PC-3 (cell line): ENCODE measurements at regions of chr13 and their contacts with region 1.

Region 1: GRCh38 chr13:41588899-41589298 is 131.5 kb downstream of the RGCC start:
- DNase-seq: peak; percentile 86
- ATAC-seq: peak; percentile 92
- H3K4me3 ChIP-seq: no peak overlapping the region
- H3K27ac ChIP-seq: peak overlapping the region; percentile 78
- H3K4me1 ChIP-seq: peaks cover 32% of the 10 kb centered on the region
- H3K27me3 ChIP-seq: no peaks in the 10 kb centered on the region
- CTCF ChIP-seq: no peak

Region 2: GRCh38 chr13:41456768-41457588 is 131.9 kb before region 1 on chr13 and contains the start of gene RGCC:
- CTCF ChIA-PET with region 1: no interaction called
- POLR2A ChIA-PET with region 1: no interaction called
- intact Hi-C with region 1: loop called (anchors 10 kb)
- DNase-seq: peak; percentile 56
- ATAC-seq: peak; percentile 73
- H3K4me3 ChIP-seq: peak within 1 kb of the TSS; percentile 78
- H3K27ac ChIP-seq: no peak within 1 kb of the TSS
- H3K4me1 ChIP-seq: peaks cover 4% of the 10 kb centered on the region; the same call in 1 of the 2 replicates
- H3K27me3 ChIP-seq: no peaks in the 10 kb centered on the region
- CTCF ChIP-seq: no peak
- total RNA-seq, gene RGCC: 2.4 and 2.6 TPM in 2 replicates

Region 3: DNA sequence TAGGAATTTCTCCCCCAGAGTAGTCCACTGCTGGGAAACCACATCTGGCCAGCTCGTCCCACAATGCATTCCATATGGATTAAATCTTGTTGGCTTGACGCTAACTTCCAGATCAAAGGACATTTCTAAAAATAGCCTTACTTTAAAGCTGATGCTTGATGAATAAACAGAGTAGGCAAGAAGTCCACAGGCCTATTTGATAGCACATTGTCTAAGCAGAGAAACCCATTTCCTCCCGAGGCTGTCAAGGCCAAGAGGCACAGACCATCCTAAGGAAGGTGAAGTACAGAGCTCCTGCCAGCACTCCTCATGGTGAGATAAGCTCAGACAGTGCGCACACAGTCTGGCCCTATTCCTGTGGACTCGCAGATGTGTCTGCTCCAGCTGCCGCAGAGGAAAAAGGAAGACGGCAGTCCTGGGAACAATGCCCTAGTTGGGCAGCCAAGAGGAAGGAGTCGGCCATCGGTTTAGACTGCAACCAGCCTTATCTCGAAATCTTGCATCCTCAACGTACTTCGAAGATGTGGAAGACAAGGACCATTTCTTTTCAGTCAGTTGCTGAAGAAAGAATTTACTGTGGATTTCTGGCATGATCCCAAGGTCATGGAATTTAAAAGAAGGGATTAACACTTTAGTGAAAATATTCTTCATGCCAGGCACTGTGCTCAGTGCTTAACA is 25.2 kb after region 1 on chr13:
- CTCF ChIA-PET with region 1: no interaction called
- POLR2A ChIA-PET with region 1: no interaction called
- intact Hi-C with region 1: loop called (anchors 1 kb)
- DNase-seq: peak; percentile 35
- ATAC-seq: no peak
- H3K4me3 ChIP-seq: no peak overlapping the region
- H3K27ac ChIP-seq: no peak overlapping the region; the same call in 1 of the 2 replicates
- H3K4me1 ChIP-seq: peaks cover 44% of the 10 kb centered on the region
- H3K27me3 ChIP-seq: no peaks in the 10 kb centered on the region
- CTCF ChIP-seq: no peak